Activated T-helper 1 cell treated with anti-CD3 and anti-CD28 coated beads, Interleukin-12 subunit alpha, Interleukin-12 subunit beta, Interleukin-2, Interleukin-4 antibody, amounts not matched to agents 30 ng/mL and 10 ng/mL and 1 ng/mL, durations not matched to agents 14 hours and 24 hours and 36 hours (primary cell): ENCODE measurements at regions of chr3 and their contacts with region 1.

Region 1: DNA sequence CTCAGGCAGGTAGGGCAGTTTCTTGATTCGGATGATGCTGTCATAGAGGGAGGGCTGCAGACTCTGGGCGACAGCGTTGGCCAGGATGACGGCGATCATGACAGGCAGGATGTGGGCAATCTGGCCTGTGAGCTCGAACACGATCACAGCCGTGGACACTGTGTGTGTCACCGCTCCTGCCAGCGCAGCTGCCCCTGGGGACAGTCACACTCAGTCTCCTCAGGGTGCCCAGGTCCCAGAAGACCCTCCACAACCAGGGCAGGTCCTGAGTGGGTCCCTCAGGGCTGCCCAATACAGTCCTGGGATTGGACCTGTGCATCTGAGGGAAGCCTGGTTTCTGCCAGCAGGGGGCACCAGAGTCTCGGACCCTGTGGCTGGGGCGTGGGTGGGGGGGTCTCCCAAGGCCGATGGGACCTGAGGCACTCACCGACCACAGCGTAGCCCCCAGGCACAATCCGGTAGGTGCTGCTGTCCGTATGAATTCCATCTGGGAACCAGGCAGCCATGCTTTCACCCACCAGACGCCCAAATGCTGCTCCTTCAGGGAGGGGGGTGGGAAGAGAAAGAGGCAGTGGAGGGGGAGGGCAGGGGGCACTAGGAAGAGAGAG is 7.2 kb downstream of the CLCN2 start:
- DNase-seq: peak; percentile 22
- H3K4me3 Mint-ChIP-seq: no peak overlapping the region
- H3K27ac Mint-ChIP-seq: no peak overlapping the region
- H3K4me1 Mint-ChIP-seq: no peaks in the 10 kb centered on the region
- H3K27me3 Mint-ChIP-seq: no peaks in the 10 kb centered on the region

Region 2: GRCh38 chr3:184320099-184320445 is 34.2 kb before region 1 on chr3:
- intact Hi-C with region 1: loop called (anchors 1 kb)
- DNase-seq: no peak
- H3K4me3 Mint-ChIP-seq: no peak overlapping the region
- H3K27ac Mint-ChIP-seq: no peak overlapping the region
- H3K4me1 Mint-ChIP-seq: peaks cover 35% of the 10 kb centered on the region
- H3K27me3 Mint-ChIP-seq: no peaks in the 10 kb centered on the region